GM10248 (cell line): ENCODE measurements at regions of chr6 and their contacts with region 1.

Region 1: DNA sequence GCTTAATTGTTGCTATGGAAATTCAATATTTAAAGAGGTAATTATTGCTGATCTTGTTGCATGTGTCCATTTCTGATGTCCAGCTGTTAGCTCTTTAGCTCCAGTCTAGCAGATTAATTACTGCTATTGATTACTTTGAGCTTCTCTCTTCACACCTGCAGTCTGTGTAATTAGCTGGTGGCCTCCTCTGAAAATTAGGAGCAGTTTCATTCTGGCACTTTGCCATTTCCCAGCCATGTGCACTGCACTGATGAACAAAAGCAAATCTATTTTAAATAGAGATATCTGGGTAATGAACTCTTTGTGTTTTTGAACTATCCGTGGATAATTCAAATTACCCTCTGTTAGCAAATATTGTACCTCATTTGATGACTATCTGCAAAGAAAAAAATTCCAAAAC is 275.9 kb downstream of the RNF144B start:
- DNase-seq: no peak
- CTCF ChIP-seq: no peak

Region 2: GRCh38 chr6:18561037-18561750 is 101.8 kb before region 1 on chr6:
- CTCF ChIA-PET with region 1: no interaction called
- POLR2A ChIA-PET with region 1: no interaction called
- DNase-seq: no peak
- CTCF ChIP-seq: no peak

Region 3: DNA sequence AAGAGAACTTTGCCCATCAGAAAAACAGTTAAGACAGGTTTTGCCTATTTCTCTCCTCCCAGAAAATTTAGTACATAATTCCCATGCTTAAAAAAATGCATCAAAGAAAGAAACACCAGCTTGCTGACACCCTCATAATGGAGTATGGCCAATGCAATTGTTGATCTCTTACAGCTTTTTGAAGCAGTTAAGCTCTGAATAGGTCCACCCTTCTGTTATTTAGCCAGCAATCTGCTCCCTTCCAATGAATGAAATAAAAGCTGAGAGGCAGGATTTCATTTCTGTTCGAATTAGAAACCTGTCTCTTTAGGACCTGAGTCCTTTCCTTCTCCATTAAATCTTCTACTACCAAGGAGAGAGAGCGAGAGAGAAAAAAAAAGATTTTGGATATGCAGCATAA is 12.9 kb after region 1 on chr6:
- CTCF ChIA-PET with region 1: interaction called, 10 read pairs
- POLR2A ChIA-PET with region 1: no interaction called
- DNase-seq: no peak
- CTCF ChIP-seq: no peak

Region 4: DNA sequence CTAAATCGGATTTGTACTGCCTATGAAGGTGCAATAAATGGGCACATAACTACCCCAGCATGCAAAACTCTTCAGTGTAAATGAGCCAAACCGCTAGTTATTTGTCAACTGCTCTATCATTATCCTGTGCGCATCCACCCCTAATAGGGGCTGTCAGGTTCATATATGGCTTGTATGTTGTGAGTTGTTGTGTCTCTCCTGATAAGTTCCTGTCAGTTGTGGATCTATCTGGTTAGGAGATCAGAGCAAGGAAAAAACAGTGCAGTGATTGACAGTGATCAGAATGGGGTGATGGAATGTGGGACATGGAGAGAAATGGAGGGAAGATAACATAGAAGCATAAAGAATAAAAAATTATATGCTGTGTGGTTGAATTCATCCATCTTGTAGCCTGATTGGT is 487.3 kb after region 1 on chr6:
- CTCF ChIA-PET with region 1: no interaction called
- POLR2A ChIA-PET with region 1: no interaction called
- DNase-seq: no peak
- CTCF ChIP-seq: no peak